ENCODE measurements at regions of chr1 and their contacts with region 1.

Region 1: DNA sequence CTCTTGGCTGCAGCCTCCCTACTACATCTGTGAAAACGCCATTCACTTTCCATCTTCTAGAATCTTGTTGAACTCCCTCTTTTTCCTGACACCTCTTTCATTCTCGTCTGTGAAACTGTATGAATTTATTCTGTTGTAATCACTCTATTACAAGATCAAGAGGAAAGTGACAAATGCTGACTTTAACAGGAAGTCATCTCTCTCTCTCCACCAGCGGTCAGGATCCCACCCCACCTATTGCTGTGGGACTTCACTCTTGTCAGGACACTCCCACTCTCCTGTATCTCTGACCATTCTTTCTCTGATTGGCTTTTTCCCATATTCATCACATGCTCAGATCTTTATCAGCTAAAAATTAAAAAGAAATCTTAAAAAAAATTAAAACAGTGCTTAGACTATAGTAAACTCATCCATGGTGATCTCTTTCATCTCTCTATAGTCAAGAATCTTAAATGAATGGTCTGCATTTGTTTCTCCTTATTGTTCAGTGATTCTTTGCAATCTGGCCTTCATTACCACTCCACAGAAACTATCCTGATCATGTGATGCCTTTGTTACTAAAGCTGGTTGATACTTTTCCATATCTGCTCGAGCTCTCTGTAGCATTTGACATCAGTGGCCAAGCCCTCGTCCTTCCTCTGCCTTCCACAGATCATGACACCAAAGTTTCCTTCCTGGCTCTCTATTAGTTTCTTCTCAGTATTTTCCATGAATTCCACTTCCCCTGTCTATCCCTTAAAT is 113.6 kb downstream of the UCHL5 start:
- DNase-seq: no peak
- H3K4me3 ChIP-seq: no peak overlapping the region
- H3K27ac ChIP-seq: no peak overlapping the region
- H3K4me1 ChIP-seq: no peaks in the 10 kb centered on the region
- H3K27me3 ChIP-seq: no peaks in the 10 kb centered on the region
- CTCF ChIP-seq: no peak

Region 2: DNA sequence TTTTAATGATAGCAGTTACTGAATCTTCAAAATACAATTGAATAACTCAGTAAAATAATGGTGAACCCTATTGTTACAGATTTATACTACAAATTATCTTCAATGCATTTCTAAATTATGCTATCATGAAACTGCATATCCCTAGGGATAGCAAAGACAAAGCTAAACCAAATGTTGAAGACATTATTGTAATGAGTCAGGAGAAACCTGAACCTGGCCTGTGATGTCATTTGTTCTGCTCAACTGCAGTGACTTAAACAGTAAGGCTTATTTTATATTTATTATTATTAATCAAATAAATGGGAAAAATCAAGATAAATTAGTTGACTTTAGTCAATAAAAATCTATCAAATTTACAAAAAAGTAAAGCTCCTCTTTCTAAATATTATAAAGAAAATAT is 13.3 kb after region 1 on chr1:
- CTCF ChIA-PET with region 1: no interaction called
- dilution Hi-C with region 1: no loop called
- in situ Hi-C with region 1: no loop called
- intact Hi-C with region 1: loop called (anchors 2 kb)
- DNase-seq: no peak
- H3K4me3 ChIP-seq: no peak overlapping the region
- H3K27ac ChIP-seq: no peak overlapping the region
- H3K4me1 ChIP-seq: no peaks in the 10 kb centered on the region
- H3K27me3 ChIP-seq: no peaks in the 10 kb centered on the region
- CTCF ChIP-seq: no peak